ENCODE measurements at regions of chrX and their contacts with region 1.

Region 1: GRCh38 chrX:38192007-38192810 is 28.5 kb downstream of the SRPX start:
- DNase-seq: no peak
- ATAC-seq: peak in 2 of 8 donors; percentile 31 to 72
- H3K4me3 ChIP-seq: no peak overlapping the region
- H3K27ac ChIP-seq: no peak overlapping the region
- H3K4me1 ChIP-seq: peaks cover 0 to 5% (median 0%) of the 10 kb centered on the region in 9 donors
- H3K27me3 ChIP-seq: peaks cover 0 to 46% (median 0%) of the 10 kb centered on the region in 7 donors
- CTCF ChIP-seq: peak in 8 of 9 donors; percentile 18 to 51 (median 44)

Region 2: GRCh38 chrX:37765507-37765906 is 426.7 kb before region 1 on chrX:
- intact Hi-C with region 1: no loop called
- DNase-seq: no peak
- ATAC-seq: no peak
- H3K4me3 ChIP-seq: no peak overlapping the region
- H3K27ac ChIP-seq: no peak overlapping the region
- H3K4me1 ChIP-seq: peaks cover 0 to 5% (median 0%) of the 10 kb centered on the region in 9 donors
- H3K27me3 ChIP-seq: peaks cover 0 to 18% (median 0%) of the 10 kb centered on the region in 7 donors
- CTCF ChIP-seq: no peak

Region 3: GRCh38 chrX:38275615-38276014 is 83.4 kb after region 1 on chrX:
- intact Hi-C with region 1: loop called in 6 of 10 experiments (anchors 5 to 10 kb)
- DNase-seq: no peak
- ATAC-seq: no peak
- H3K4me3 ChIP-seq: no peak overlapping the region
- H3K27ac ChIP-seq: no peak overlapping the region
- H3K4me1 ChIP-seq: peaks cover 0 to 5% (median 0%) of the 10 kb centered on the region in 9 donors
- H3K27me3 ChIP-seq: peaks cover 0 to 15% (median 0%) of the 10 kb centered on the region in 7 donors
- CTCF ChIP-seq: no peak

Region 4: GRCh38 chrX:38282044-38282443 is 89.8 kb after region 1 on chrX:
- intact Hi-C with region 1: loop called in 6 of 10 experiments (anchors 5 to 10 kb)
- DNase-seq: peak; percentile 4
- ATAC-seq: peak in 4 of 8 donors; percentile 44 to 82 (median 60)
- H3K4me3 ChIP-seq: no peak overlapping the region
- H3K27ac ChIP-seq: no peak overlapping the region
- H3K4me1 ChIP-seq: no peaks in the 10 kb centered on the region
- H3K27me3 ChIP-seq: peaks cover 0 to 7% (median 0%) of the 10 kb centered on the region in 7 donors
- CTCF ChIP-seq: peak; percentile 16 to 59 (median 35)

Region 5: DNA sequence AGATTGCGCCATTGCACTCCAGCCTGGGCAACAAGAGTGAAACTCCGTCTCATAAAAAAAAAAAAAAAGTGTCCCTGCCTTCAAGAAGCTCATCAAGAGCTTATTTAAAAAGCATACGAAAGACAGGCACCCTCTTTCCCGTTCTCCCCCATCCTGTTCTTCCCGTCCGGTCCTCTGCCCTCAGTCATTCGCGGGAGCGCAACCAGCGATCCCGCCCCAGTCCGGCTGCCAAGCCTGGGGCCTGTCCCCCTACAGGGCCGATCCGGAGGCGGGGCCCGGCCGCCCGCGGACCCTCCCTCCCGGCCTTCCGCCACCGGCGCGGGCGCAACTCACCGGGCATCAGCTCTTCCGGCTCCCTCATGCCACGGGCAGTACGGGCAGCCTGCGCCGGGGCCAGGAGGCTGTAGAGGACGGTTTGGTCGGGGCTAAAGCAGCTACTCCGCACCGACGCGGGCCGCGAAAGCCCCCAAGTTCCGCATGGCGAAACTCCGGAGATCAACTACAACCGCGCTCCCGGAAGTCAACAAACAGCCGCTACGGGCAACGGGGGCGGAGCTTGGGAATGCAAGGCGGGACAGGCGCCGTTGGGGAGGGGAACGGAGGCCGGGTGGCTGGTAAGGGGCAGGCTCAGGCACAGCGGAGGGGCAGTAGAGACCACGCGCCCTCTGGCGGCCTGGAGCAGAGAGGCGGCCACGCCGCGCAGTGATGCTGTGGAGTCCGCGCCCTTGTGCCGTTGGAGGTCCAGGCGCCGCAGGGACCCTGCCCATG is 135.0 kb after region 1 on chrX and contains the start of gene RPGR:
- intact Hi-C with region 1: loop called in 1 of 10 experiments (anchors 2 kb)
- DNase-seq: peak; percentile 93 to 94
- ATAC-seq: peak; percentile 98 to 99 (median 99)
- H3K4me3 ChIP-seq: peak within 1 kb of the TSS; percentile 46 to 89 (median 75)
- H3K27ac ChIP-seq: peak within 1 kb of the TSS; percentile 75 to 89 (median 85)
- H3K4me1 ChIP-seq: peaks cover 0 to 10% (median 0%) of the 10 kb centered on the region in 9 donors
- H3K27me3 ChIP-seq: no peaks in the 10 kb centered on the region
- CTCF ChIP-seq: peak; percentile 52 to 84 (median 75)
- total RNA-seq, gene RPGR: 3.8 to 10.2 (median 5.5) TPM

Measured in heart right ventricle (tissue), 16 donors.